ENCODE measurements at regions of chr12 and their contacts with region 1.

Region 1: GRCh38 chr12:49264738-49265515 is at the start of gene TUBA1C:
- DNase-seq: peak; percentile 91
- H3K4me3 Mint-ChIP-seq: peak within 1 kb of the TSS; percentile 97
- H3K27ac Mint-ChIP-seq: peak within 1 kb of the TSS; percentile 96
- H3K4me1 Mint-ChIP-seq: peaks cover 50% of the 10 kb centered on the region
- H3K27me3 Mint-ChIP-seq: peaks cover 2% of the 10 kb centered on the region
- total RNA-seq, gene TUBA1C: 214 to 227 TPM

Region 2: GRCh38 chr12:49069507-49070346 is 195.2 kb before region 1 on chr12 and contains the start of gene RHEBL1:
- CTCF ChIA-PET with region 1: no interaction called
- intact Hi-C with region 1: loop called (anchors 1 kb)
- DNase-seq: peak; percentile 100
- H3K4me3 Mint-ChIP-seq: peak within 1 kb of the TSS; percentile 99
- H3K27ac Mint-ChIP-seq: peak within 1 kb of the TSS; percentile 76
- H3K4me1 Mint-ChIP-seq: peaks cover 12% of the 10 kb centered on the region
- H3K27me3 Mint-ChIP-seq: no peaks in the 10 kb centered on the region
- total RNA-seq, gene RHEBL1: 11.8 to 15.2 TPM

Region 3: DNA sequence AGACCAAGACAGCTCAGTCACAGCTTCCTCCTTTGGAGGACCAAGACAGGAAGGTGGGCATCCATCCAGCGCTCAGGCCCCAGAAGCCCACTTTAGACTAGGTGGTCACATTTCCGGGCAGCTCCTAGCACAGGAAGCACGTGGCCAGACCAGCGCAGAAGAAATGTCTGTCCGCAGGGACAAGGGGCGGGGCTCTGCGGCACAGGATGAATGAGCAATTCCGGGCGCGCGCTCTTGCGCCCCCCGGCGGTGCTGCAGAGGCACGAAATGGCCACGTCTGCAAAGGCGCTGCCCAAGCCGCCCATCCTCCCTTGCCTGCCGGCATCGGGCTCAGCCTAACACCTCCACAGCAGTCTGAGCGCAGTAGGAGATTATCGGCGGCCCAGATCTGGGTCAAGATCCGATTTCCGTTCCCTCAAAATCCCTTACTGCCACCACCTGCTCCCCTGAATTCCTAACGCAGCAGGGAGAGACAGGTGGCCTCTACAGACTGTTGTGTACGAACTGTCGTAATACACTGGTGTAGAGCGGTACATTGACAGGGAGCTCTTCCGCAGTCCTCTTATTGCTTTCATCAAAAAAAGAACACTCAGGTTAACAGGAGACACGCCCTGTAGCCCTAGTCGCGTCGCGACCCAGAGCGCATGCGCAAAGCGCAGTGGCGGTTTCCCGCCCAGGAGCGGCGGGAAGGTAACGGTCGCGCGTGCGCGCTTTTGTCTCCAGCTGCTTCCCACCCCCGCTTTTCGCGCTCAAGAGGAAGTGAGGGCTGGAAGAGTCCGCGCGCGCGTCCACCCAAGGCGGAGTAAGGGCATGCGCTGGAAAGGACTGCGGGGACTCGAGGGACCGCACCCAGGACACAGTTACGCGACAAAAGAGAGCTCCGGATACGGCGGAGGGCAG is 134.5 kb before region 1 on chr12:
- CTCF ChIA-PET with region 1: no interaction called
- intact Hi-C with region 1: loop called (anchors 1 kb)
- DNase-seq: peak; percentile 96
- H3K4me3 Mint-ChIP-seq: peak overlapping the region; percentile 97
- H3K27ac Mint-ChIP-seq: peak overlapping the region; percentile 100
- H3K4me1 Mint-ChIP-seq: peaks cover 43% of the 10 kb centered on the region
- H3K27me3 Mint-ChIP-seq: no peaks in the 10 kb centered on the region

Region 4: DNA sequence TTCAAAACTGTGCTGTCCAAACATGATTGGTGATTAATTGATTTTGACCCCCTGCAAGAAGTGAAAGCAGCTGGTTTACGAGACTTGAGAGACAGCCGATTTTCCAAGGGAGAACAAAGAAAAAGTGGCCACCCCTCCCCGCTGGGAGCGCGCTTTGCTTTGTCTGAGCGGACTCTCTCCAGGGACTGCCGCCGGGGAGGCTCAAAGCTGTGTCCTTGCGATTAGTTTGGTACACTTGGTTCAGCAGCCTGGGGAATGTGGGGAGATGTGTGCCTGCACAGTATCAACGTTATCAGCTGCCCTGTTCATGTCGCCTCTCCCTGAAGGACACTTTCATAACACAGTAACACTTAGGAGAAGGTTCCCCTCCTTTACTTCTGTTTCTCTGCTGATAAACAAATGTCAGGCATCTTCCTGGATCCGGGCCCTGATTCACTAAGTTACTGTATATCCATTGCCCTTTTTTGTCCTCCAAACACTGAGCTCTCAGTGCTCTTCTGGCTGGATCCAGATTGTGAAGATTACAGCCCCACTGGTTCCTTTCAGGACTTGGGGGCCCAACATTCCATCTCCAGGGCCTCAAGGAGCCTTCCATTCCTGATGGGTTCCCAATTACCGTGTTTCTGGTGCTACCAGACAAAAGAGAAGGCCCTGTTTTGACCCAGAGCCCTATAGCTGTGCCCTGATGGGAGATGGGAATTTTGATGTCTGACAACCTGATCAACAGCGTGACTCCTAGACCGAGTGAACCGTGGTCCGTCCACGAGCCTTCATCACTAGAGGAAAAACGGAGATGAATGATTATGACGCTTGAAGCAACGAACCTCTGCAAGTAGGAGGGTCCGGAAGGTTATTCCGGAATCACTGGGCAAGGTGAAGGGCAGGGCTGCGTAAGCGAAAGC is 31.7 kb before region 1 on chr12:
- CTCF ChIA-PET with region 1: interaction called, 3 read pairs
- intact Hi-C with region 1: loop called (anchors 1 kb)
- DNase-seq: no peak
- H3K4me3 Mint-ChIP-seq: peak overlapping the region; percentile 85
- H3K27ac Mint-ChIP-seq: peak overlapping the region; percentile 81
- H3K4me1 Mint-ChIP-seq: peaks cover 12% of the 10 kb centered on the region
- H3K27me3 Mint-ChIP-seq: no peaks in the 10 kb centered on the region

Region 5: DNA sequence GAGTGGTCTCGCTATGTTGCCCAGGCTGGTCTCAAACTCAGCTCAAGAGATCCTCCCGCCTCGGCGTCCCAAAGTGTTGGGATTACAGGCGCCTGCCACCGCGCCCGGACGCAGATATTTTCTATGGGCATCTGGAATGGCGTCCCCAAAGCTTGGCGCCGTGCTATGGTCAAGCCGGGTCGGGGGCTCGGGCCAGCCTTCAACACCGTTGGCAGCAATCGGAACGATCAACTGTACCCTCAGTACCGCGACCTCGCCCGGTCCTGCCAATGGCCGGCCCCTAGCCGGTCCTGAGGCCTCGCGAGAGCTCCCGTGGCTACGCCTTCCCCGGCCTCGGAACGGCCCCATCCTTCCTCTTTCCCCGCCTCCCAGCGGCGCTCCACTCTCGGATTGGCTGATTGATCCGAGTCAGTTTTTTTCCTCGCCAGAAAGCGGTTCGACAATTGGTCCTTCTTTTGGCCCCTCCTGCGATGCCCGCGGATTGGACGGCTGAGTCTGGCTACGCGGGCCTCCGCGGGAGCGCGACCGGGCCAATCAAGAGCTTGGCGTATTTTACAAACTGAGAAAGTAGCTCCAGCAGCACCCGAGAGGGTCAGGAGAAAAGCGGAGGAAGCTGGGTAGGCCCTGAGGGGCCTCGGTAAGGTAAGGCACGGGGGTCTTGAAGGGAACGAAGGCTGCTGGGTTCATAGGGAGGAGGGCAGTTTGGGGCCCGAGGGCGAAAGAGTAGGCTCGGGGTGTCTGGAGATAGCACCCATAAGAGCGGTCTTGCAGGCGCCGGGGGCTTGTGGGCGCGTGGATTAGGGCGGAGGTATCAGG is 58.0 kb after region 1 on chr12 and contains the start of gene TROAP:
- CTCF ChIA-PET with region 1: no interaction called
- intact Hi-C with region 1: loop called (anchors 1 kb)
- DNase-seq: peak; percentile 99
- H3K4me3 Mint-ChIP-seq: peak within 1 kb of the TSS; percentile 98
- H3K27ac Mint-ChIP-seq: peak within 1 kb of the TSS; percentile 91
- H3K4me1 Mint-ChIP-seq: peaks cover 17% of the 10 kb centered on the region
- H3K27me3 Mint-ChIP-seq: no peaks in the 10 kb centered on the region
- total RNA-seq, gene TROAP: 67.4 to 68.8 TPM

Region 6: GRCh38 chr12:49366652-49367380 is 101.9 kb after region 1 on chr12:
- CTCF ChIA-PET with region 1: no interaction called
- intact Hi-C with region 1: loop called (anchors 1 kb)
- DNase-seq: peak; percentile 90
- H3K4me3 Mint-ChIP-seq: peak overlapping the region; percentile 95
- H3K27ac Mint-ChIP-seq: peak overlapping the region; percentile 95
- H3K4me1 Mint-ChIP-seq: peaks cover 23% of the 10 kb centered on the region
- H3K27me3 Mint-ChIP-seq: no peaks in the 10 kb centered on the region

Region 7: GRCh38 chr12:50271280-50272247 is 1006.6 kb after region 1 on chr12:
- CTCF ChIA-PET with region 1: no interaction called
- intact Hi-C with region 1: no loop called
- DNase-seq: no peak
- H3K4me3 Mint-ChIP-seq: no peak overlapping the region
- H3K27ac Mint-ChIP-seq: no peak overlapping the region
- H3K4me1 Mint-ChIP-seq: peaks cover 4% of the 10 kb centered on the region
- H3K27me3 Mint-ChIP-seq: no peaks in the 10 kb centered on the region

Measured in activated naive CD4-positive, alpha-beta T cell treated with anti-CD3 and anti-CD28 coated beads for 36 hours (primary cell).